K562 (cell line): ENCODE measurements at regions of chr4 and their contacts with region 1.

Region 1: GRCh38 chr4:27010334-27010940 is 149.8 kb downstream of the STIM2 start:
- DNase-seq: peak; percentile 29 to 64 (median 44)
- ATAC-seq: peak; percentile 88
- H3K4me3 ChIP-seq: no peak overlapping the region
- H3K27ac ChIP-seq: no peak overlapping the region
- H3K4me1 ChIP-seq: no peaks in the 10 kb centered on the region
- H3K27me3 ChIP-seq: no peaks in the 10 kb centered on the region
- CTCF ChIP-seq: peak; percentile 62 to 82 (median 75)
- EP300 ChIP-seq: no peak
- POLR2A ChIP-seq: no peak
- RAD21 ChIP-seq: peak; percentile 85 to 87

Region 2: DNA sequence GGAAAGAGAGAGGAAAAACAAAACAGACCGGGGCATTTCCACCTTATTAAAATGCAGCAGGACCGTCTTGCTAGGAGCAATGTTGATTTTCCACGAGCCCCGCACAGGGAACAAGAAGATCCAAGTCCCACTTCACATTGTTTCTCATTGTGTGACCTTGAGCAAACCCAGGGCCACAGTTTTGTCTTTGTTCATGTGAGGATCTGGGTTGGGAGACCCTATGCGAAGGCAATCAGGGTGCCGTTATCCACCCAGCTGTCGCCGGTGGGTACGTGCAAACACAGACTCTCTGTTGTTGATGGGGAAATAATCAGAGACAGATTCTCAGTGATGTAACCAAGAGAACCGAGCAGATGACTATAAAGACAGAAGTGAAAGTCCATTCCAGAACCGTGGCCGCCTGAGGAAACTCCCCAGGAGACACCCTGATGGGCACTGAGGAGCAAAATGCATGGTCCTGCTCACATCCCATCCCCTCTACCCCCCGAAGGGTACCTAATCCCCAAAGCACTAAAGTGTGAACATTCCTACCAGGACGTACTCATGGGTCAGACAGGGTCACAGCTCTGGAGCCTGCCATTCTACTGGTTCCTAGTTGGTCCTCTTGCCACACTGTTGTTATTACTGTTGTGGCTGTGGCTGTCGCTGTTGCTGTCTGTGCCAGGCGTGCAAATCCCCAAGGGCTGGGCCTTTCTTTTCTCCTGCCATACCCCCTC is 792.3 kb before region 1 on chr4:
- CTCF ChIA-PET with region 1: no interaction called
- POLR2A ChIA-PET with region 1: no interaction called
- in situ Hi-C with region 1: no loop called
- intact Hi-C with region 1: loop called (anchors 10 kb)
- DNase-seq: no peak
- ATAC-seq: no peak; the same call in 2 of the 3 replicates
- H3K4me3 ChIP-seq: no peak overlapping the region
- H3K27ac ChIP-seq: no peak overlapping the region
- H3K4me1 ChIP-seq: no peaks in the 10 kb centered on the region
- H3K27me3 ChIP-seq: peaks cover 6 to 55% of the 10 kb centered on the region in 2 experiments; a peak in 3 of 5 replicates
- CTCF ChIP-seq: no peak
- EP300 ChIP-seq: no peak
- POLR2A ChIP-seq: no peak
- RAD21 ChIP-seq: no peak

Region 3: GRCh38 chr4:26320538-26321325 is 689.7 kb before region 1 on chr4 and contains the start of gene RBPJ:
- CTCF ChIA-PET with region 1: no interaction called
- POLR2A ChIA-PET with region 1: no interaction called
- in situ Hi-C with region 1: no loop called
- intact Hi-C with region 1: loop called (anchors 10 kb)
- DNase-seq: peak; percentile 85 to 92 (median 86)
- ATAC-seq: peak; percentile 73
- H3K4me3 ChIP-seq: peak within 1 kb of the TSS; percentile 82
- H3K27ac ChIP-seq: peak within 1 kb of the TSS; percentile 73
- H3K4me1 ChIP-seq: peaks cover 16 to 23% of the 10 kb centered on the region in 2 experiments
- H3K27me3 ChIP-seq: no peaks in the 10 kb centered on the region
- CTCF ChIP-seq: peak in 1 of 3 experiments; percentile 2; a peak in 1 of 6 replicates
- EP300 ChIP-seq: no peak
- POLR2A ChIP-seq: peak; percentile 82
- RAD21 ChIP-seq: no peak
- polyA plus RNA-seq, gene RBPJ: 23.1 to 42.0 TPM

Region 4: DNA sequence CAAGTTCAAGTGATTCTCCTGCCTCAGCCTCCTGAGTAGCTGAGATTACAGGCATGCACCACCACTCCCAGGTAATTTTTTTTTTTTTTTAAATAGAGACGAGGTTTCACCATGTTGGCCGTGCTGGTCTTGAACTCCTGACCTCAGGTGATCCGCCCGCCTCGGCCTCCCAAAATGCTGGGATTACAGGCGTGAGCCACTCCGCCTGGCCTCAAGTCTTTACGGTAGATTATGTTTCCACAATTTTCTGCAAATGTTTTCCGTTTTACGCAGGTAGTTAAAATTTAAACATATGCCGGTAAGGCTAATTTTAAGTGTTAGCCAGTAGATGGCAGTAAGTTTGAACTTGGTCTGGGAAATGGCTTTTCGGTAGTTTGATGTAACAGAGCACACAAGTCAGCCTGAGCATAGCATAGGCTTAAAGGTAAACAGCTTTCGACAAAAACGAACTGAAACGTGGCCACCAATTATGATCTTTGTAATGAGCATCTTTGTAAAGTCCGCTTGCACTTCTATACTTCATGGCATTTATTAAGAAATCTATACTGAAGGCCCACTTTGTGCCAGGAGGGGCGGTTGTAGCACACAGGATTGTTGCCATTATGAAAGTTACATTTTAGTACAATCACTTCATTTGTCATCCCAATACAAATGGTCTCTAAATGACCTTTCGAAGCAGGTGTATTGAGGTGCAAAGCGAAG is 551.2 kb before region 1 on chr4:
- CTCF ChIA-PET with region 1: interaction called, 5 read pairs
- POLR2A ChIA-PET with region 1: no interaction called
- in situ Hi-C with region 1: loop called (anchors 10 kb)
- intact Hi-C with region 1: loop called (anchors 5 kb)
- DNase-seq: peak; percentile 40 to 53 (median 48)
- ATAC-seq: peak; percentile 84
- H3K4me3 ChIP-seq: no peak overlapping the region
- H3K27ac ChIP-seq: no peak overlapping the region
- H3K4me1 ChIP-seq: no peaks in the 10 kb centered on the region
- H3K27me3 ChIP-seq: peaks cover 4 to 16% of the 10 kb centered on the region in 2 experiments; a peak in 4 of 5 replicates
- CTCF ChIP-seq: peak; percentile 38 to 68 (median 61); a peak in 5 of 6 replicates
- EP300 ChIP-seq: no peak
- POLR2A ChIP-seq: no peak
- RAD21 ChIP-seq: peak; percentile 77 to 81

Region 5: DNA sequence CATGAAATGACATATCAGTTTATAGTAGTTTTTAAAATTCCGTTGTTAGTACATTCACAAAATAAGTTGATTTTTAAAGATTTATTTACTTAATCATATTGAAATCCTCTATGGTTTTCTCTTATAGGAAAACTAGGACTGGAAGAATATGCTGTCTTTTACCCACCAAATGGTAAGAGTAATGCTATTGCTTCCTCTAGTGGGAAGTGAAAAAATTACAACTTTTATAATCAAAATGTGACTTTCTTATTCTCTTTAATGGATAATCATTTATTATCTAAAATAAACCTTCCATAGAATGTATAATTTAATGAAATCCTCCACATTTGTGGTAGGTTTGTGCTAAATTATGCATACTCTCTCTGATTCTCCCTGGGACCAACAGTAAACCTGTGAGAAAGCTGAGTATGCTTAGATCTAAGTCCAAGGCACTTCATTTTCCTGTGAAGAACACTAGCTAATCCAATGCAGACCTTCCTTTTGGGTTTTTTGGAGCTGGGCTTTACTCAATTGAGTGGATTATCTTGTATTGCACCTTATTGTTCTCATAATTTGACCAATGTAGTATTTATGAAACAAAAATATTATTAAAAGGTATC is 290.4 kb before region 1 on chr4:
- CTCF ChIA-PET with region 1: no interaction called
- POLR2A ChIA-PET with region 1: no interaction called
- in situ Hi-C with region 1: no loop called
- intact Hi-C with region 1: loop called (anchors 2 kb)
- DNase-seq: peak in 3 of 4 experiments; percentile 10 to 21 (median 17)
- ATAC-seq: peak; percentile 58; the same call in 1 of the 3 replicates
- H3K4me3 ChIP-seq: no peak overlapping the region
- H3K27ac ChIP-seq: no peak overlapping the region
- H3K4me1 ChIP-seq: no peaks in the 10 kb centered on the region
- H3K27me3 ChIP-seq: no peaks in the 10 kb centered on the region
- CTCF ChIP-seq: peak in 2 of 3 experiments; percentile 50 to 93; a peak in 4 of 6 replicates
- EP300 ChIP-seq: no peak
- POLR2A ChIP-seq: no peak
- RAD21 ChIP-seq: peak; percentile 94 to 98

Region 6: GRCh38 chr4:26787461-26788340 is 222.7 kb before region 1 on chr4:
- CTCF ChIA-PET with region 1: interaction called, 5 read pairs
- POLR2A ChIA-PET with region 1: no interaction called
- in situ Hi-C with region 1: no loop called
- intact Hi-C with region 1: loop called (anchors 5 kb)
- DNase-seq: peak; percentile 26 to 65 (median 42)
- ATAC-seq: peak; percentile 74
- H3K4me3 ChIP-seq: no peak overlapping the region
- H3K27ac ChIP-seq: peak overlapping the region; percentile 21; the same call in 1 of the 3 replicates
- H3K4me1 ChIP-seq: peaks cover 11 to 40% of the 10 kb centered on the region in 2 experiments; a peak in 4 of 5 replicates
- H3K27me3 ChIP-seq: no peaks in the 10 kb centered on the region
- CTCF ChIP-seq: peak; percentile 37 to 52 (median 47)
- EP300 ChIP-seq: peak; percentile 41; the same call in 1 of the 2 replicates
- POLR2A ChIP-seq: no peak
- RAD21 ChIP-seq: peak; percentile 37 to 44; a peak in 3 of 4 replicates